ENCODE measurements at regions of chr2 and their contacts with region 1.

Region 1: DNA sequence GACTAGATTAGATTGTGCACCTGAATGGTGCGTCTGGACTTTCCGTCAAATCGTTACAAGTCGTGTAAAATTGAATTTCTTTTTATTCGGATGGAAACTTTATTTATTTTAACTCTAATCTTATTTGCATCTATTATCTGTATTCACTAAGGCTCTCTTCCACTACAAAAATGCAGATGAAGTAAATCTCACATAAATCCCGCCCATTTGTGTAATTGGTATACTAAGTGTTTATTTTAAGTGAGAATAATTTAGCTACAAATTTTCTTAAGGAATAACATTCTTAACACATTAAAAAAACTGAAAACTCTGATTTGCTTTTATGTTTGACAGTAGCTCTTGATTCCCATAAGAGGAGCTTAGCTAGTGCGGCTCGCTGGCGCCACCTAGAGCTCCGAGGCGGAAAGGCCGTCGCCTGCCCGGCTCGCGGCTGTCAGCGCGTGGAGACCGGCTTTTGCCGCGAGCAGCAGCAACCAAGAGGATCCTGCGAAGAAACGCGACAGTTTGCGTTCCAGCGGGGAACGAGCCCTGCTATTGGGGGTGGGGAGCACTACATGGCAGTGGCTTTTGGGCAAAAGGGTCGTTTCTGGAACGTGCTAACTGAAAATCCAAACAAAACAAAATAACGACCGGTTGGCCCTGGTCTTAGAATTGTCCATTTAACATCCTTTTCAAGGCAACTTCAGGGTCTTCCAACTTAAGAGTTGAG is 6.7 kb downstream of the SP9 start:
- DNase-seq: peak; percentile 82
- ATAC-seq: peak; percentile 73
- H3K4me3 Mint-ChIP-seq: peak overlapping the region; percentile 80
- H3K27ac Mint-ChIP-seq: peak overlapping the region; percentile 81
- H3K4me1 Mint-ChIP-seq: peaks cover 39% of the 10 kb centered on the region
- H3K27me3 Mint-ChIP-seq: peaks cover 47% of the 10 kb centered on the region
- CTCF ChIP-seq: peak; percentile 86

Region 2: GRCh38 chr2:173027181-173028128 is 1314.0 kb before region 1 on chr2:
- CTCF ChIA-PET with region 1: interaction called, 23 read pairs
- POLR2A ChIA-PET with region 1: no interaction called
- intact Hi-C with region 1: loop called (anchors 1 kb)
- DNase-seq: no peak
- ATAC-seq: peak; percentile 67
- H3K4me3 Mint-ChIP-seq: no peak overlapping the region
- H3K27ac Mint-ChIP-seq: no peak overlapping the region
- H3K4me1 Mint-ChIP-seq: peaks cover 4% of the 10 kb centered on the region
- H3K27me3 Mint-ChIP-seq: peaks cover 8% of the 10 kb centered on the region
- CTCF ChIP-seq: peak; percentile 47

Region 3: DNA sequence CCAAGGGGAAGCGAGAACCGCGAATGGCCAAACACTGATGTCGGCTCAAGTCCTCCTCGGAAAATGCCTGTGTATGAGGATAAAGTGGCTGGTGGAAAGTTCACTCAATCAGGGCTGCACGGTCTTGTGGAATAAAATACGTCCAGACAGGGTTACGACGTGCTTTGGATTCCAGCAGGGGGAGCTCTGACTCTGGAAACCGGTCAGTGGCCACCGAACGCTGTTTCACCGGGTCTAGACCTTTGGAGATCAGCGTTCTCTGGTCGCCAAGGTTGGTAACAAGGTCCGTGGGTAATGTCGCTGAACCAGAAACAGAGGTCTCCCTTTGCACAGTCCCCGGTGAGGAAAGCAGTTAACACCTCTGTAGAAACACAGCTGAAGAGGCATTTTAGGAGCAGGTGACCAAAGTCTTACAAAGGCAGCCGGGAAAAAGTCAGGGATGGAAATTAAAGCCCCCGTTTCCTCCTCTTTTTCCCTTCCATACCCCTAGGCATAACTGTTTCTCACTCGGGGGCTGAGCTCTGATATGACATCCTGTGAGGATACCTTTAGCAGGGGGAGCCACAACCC is 939.0 kb before region 1 on chr2:
- CTCF ChIA-PET with region 1: interaction called, 109 read pairs
- POLR2A ChIA-PET with region 1: no interaction called
- intact Hi-C with region 1: loop called (anchors 1 kb)
- DNase-seq: peak; percentile 48
- ATAC-seq: peak; percentile 79
- H3K4me3 Mint-ChIP-seq: no peak overlapping the region
- H3K27ac Mint-ChIP-seq: no peak overlapping the region
- H3K4me1 Mint-ChIP-seq: peaks cover 4% of the 10 kb centered on the region
- H3K27me3 Mint-ChIP-seq: peaks cover 47% of the 10 kb centered on the region
- CTCF ChIP-seq: no peak

Region 4: DNA sequence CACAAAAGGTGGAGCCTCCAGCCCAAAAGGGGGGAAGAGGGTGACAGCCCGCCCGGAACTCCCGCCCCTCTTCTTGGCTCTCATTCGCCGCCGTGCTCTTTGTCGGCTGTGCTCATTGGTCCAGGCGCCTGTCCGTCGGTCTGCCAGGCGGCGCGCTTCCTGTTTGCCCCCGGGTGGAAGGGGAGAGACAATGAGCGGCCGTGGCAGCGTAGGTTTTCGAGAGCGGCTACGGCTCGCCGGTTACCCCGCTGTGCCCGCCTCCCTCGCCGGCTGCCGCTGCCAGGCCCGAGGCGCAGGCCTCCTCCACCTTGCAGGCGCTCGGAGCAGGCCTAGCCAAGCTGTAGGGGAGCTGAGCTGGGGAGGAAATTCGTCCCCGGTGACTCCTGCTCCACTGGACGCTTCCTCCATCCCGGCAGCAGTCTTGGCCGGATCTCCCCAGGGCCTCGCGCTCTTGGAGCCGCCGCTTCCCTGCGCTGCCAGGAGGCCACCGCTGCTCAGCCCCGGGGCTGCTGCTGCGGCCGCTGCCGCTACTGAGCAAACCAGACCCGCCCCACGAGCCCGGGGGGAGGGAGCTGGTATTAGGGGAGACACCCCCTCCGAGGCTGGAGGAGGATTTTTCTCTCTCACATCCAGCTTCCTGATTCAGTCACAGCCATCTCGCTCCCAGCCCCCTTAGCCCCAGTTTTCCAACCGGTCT is 376.0 kb before region 1 on chr2 and contains the start of gene SP3:
- CTCF ChIA-PET with region 1: no interaction called
- POLR2A ChIA-PET with region 1: no interaction called
- intact Hi-C with region 1: loop called (anchors 5 kb)
- DNase-seq: peak; percentile 91
- ATAC-seq: peak; percentile 66
- H3K4me3 Mint-ChIP-seq: peak within 1 kb of the TSS; percentile 93
- H3K27ac Mint-ChIP-seq: peak within 1 kb of the TSS; percentile 98
- H3K4me1 Mint-ChIP-seq: peaks cover 45% of the 10 kb centered on the region
- H3K27me3 Mint-ChIP-seq: no peaks in the 10 kb centered on the region
- CTCF ChIP-seq: no peak
- total RNA-seq, gene SP3: 124 and 139 TPM in 2 replicates

Region 5: DNA sequence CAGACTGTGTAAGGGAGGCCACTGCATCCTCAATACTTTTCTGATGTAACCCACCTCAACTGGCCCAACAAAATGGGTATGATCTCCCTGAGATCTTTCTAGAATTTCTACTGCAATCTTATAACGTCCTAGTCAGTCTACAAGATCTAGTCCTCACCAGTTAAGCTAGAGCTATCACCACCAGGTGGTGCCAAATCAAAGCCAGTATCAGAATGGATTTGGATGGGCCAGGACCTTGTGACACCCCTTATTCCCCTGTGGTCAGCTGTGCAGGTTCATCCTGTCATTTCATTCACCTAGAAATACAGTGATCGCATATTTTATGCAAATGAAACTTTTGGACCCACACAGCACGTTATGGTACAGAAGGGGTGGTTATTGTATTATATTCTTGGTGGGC is 183.4 kb before region 1 on chr2:
- CTCF ChIA-PET with region 1: interaction called, 13 read pairs
- POLR2A ChIA-PET with region 1: no interaction called
- intact Hi-C with region 1: loop called (anchors 1 kb)
- DNase-seq: no peak
- ATAC-seq: peak; percentile 37
- H3K4me3 Mint-ChIP-seq: no peak overlapping the region
- H3K27ac Mint-ChIP-seq: no peak overlapping the region
- H3K4me1 Mint-ChIP-seq: no peaks in the 10 kb centered on the region
- H3K27me3 Mint-ChIP-seq: no peaks in the 10 kb centered on the region
- CTCF ChIP-seq: no peak

Region 6: GRCh38 chr2:174383796-174384195 is 42.4 kb after region 1 on chr2:
- CTCF ChIA-PET with region 1: no interaction called
- POLR2A ChIA-PET with region 1: no interaction called
- intact Hi-C with region 1: no loop called
- DNase-seq: no peak
- ATAC-seq: no peak
- H3K4me3 Mint-ChIP-seq: no peak overlapping the region
- H3K27ac Mint-ChIP-seq: peak overlapping the region; percentile 2
- H3K4me1 Mint-ChIP-seq: peaks cover 11% of the 10 kb centered on the region
- H3K27me3 Mint-ChIP-seq: no peaks in the 10 kb centered on the region
- CTCF ChIP-seq: no peak

Region 7: DNA sequence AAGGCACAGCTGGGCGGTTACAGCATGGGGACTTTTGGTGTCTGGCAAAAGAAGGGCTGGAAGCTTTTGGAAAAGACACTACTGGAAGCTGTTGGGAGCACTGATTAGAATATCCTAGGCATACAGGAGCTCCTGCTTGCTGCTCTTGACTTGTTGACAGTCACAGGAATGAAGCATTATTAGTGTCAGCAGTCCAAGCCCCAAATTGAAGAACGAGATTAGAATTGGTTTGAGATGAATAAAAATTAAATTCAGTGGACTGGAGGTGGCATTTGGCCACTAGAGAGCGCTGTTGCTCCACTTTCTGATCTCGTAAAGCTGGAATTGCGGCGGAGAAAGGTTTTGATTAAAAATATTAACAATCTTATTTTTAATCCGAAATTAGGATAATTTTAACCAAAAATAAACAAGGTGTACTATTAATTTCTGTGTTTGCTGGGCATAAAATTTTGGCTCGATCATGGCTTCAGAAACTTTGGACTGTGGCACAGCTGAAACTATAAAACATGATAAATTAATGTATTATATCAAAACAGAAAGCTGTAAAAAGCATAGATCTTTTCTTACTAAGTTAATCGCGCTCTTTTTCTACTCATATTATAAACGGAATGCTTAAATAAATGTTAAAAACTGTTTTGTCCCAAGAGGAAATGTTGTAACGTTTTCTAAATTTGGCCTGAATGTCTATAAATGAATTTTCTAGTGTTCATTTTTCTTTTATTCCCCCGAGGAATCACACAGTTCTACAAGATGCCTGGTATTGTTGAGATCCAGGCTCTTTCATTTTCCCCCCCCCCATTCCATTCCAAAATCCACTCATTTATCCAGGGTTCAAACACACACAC is 1785.7 kb after region 1 on chr2:
- CTCF ChIA-PET with region 1: no interaction called
- POLR2A ChIA-PET with region 1: no interaction called
- intact Hi-C with region 1: loop called (anchors 10 kb)
- DNase-seq: peak; percentile 42
- ATAC-seq: no peak
- H3K4me3 Mint-ChIP-seq: no peak overlapping the region
- H3K27ac Mint-ChIP-seq: no peak overlapping the region
- H3K4me1 Mint-ChIP-seq: peaks cover 32% of the 10 kb centered on the region
- H3K27me3 Mint-ChIP-seq: peaks cover 63% of the 10 kb centered on the region
- CTCF ChIP-seq: peak; percentile 61